ENCODE measurements at regions of chr17 and their contacts with region 1.

Region 1: GRCh38 chr17:76868176-76868668 is at the start of gene MGAT5B:
- DNase-seq: peak; percentile 91
- ATAC-seq: peak; percentile 78
- H3K4me3 Mint-ChIP-seq: peak within 1 kb of the TSS; percentile 78
- H3K27ac Mint-ChIP-seq: no peak within 1 kb of the TSS
- H3K4me1 Mint-ChIP-seq: peaks cover 12% of the 10 kb centered on the region
- H3K27me3 Mint-ChIP-seq: peaks cover 29% of the 10 kb centered on the region
- CTCF ChIP-seq: peak; percentile 75
- total RNA-seq, gene MGAT5B: 11.5 to 12.0 TPM (median 11.6 TPM) in 3 replicates

Region 2: DNA sequence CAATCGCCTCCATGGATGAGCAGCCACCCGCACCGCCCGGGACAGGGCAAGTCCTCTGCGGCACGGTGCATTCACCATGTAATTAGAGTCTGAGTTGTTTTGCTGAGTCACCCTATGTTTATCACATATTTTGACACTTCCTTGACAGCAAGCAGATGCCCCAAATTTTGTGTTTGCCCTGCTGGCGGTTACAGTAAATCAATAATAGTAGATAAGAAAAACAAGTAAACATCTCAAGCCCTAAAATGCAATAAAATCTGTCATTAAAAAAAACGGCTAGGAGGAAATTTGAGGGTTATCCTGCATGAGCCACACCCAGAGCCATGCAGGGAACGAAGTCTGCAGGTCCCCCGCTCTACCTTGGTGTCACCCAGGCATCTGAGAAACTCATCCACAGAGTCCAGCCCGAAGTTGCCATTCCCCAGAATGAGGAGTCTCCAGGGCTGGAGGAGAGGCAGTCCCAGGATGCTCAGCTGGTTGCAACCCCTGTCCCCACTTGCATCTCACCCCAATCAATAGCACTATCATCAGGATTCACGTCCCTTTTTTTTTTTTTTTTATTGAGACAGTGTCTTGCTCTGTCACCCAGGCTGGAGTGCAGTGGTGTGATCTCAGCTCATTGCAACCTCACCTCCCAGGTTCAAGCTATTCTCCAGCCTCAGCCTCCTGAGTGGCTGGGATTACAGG is 208.2 kb before region 1 on chr17:
- CTCF ChIA-PET with region 1: no interaction called
- POLR2A ChIA-PET with region 1: no interaction called
- DNase-seq: no peak
- ATAC-seq: no peak
- H3K4me3 Mint-ChIP-seq: no peak overlapping the region
- H3K27ac Mint-ChIP-seq: no peak overlapping the region
- H3K4me1 Mint-ChIP-seq: peaks cover 4% of the 10 kb centered on the region; the same call in 1 of the 2 replicates
- H3K27me3 Mint-ChIP-seq: no peaks in the 10 kb centered on the region
- CTCF ChIP-seq: no peak

Region 3: GRCh38 chr17:76805319-76805718 is 62.9 kb before region 1 on chr17:
- CTCF ChIA-PET with region 1: no interaction called
- POLR2A ChIA-PET with region 1: no interaction called
- DNase-seq: no peak
- ATAC-seq: no peak
- H3K4me3 Mint-ChIP-seq: no peak overlapping the region
- H3K27ac Mint-ChIP-seq: no peak overlapping the region
- H3K4me1 Mint-ChIP-seq: peaks cover 5% of the 10 kb centered on the region
- H3K27me3 Mint-ChIP-seq: no peaks in the 10 kb centered on the region
- CTCF ChIP-seq: no peak

Region 4: DNA sequence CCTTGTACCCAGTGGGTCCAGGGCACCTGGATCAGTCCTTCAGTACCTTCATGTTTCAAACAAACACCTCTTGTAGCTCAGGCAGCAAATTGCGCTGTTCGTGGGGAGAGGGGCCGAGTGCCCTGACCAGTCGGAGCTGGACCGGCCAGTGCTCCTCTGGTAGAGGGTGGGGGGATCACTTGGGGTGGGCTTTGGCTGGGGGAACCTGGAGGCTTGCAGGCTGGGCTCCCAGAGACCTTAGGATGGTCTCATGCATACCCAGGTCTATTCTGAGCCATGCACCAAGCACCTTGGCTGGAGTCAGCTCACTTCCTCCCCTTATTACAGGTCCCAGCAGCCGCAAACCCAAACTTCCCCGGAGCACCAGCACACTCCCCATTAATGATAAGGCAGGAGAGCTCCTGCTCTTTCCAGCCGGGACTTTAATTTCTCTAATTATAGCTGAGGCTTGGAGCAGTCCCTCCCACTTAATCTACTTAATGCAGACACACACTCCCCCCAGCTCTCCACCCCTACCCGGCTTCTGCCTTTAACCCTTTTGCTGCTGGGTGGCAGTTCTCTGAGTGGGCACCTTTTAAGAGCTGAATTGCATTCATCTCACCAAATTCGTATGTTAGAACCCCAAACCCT is 26.3 kb before region 1 on chr17:
- CTCF ChIA-PET with region 1: interaction called, 24 read pairs
- POLR2A ChIA-PET with region 1: no interaction called
- DNase-seq: peak; percentile 25
- ATAC-seq: peak; percentile 65
- H3K4me3 Mint-ChIP-seq: peak overlapping the region; percentile 56
- H3K27ac Mint-ChIP-seq: no peak overlapping the region
- H3K4me1 Mint-ChIP-seq: peaks cover 51% of the 10 kb centered on the region
- H3K27me3 Mint-ChIP-seq: peaks cover 33% of the 10 kb centered on the region
- CTCF ChIP-seq: no peak

Region 5: GRCh38 chr17:76887802-76888201 is 19.6 kb after region 1 on chr17:
- CTCF ChIA-PET with region 1: interaction called, 43 read pairs
- POLR2A ChIA-PET with region 1: no interaction called
- DNase-seq: no peak
- ATAC-seq: 0 out of 2 replicates have a peak, but pooled peaks have one; percentile 15
- H3K4me3 Mint-ChIP-seq: no peak overlapping the region
- H3K27ac Mint-ChIP-seq: peak overlapping the region; percentile 4; the same call in 1 of the 2 replicates
- H3K4me1 Mint-ChIP-seq: peaks cover 24% of the 10 kb centered on the region
- H3K27me3 Mint-ChIP-seq: no peaks in the 10 kb centered on the region
- CTCF ChIP-seq: no peak

Region 6: GRCh38 chr17:76940738-76941350 is 72.6 kb after region 1 on chr17:
- CTCF ChIA-PET with region 1: interaction called, 39 read pairs
- POLR2A ChIA-PET with region 1: no interaction called
- DNase-seq: peak; percentile 85
- ATAC-seq: peak; percentile 78
- H3K4me3 Mint-ChIP-seq: 0 out of 2 replicates have a peak overlapping the region, but pooled peaks have one; percentile 7
- H3K27ac Mint-ChIP-seq: peak overlapping the region; percentile 67
- H3K4me1 Mint-ChIP-seq: peaks cover 28% of the 10 kb centered on the region
- H3K27me3 Mint-ChIP-seq: no peaks in the 10 kb centered on the region
- CTCF ChIP-seq: peak; percentile 34; the same call in 1 of the 2 replicates

Region 7: GRCh38 chr17:76968707-76969597 is 100.7 kb after region 1 on chr17:
- CTCF ChIA-PET with region 1: interaction called, 24 read pairs
- POLR2A ChIA-PET with region 1: interaction called, 8 read pairs
- DNase-seq: peak; percentile 96
- ATAC-seq: peak; percentile 85
- H3K4me3 Mint-ChIP-seq: peak overlapping the region; percentile 78
- H3K27ac Mint-ChIP-seq: peak overlapping the region; percentile 99
- H3K4me1 Mint-ChIP-seq: peaks cover 70% of the 10 kb centered on the region
- H3K27me3 Mint-ChIP-seq: no peaks in the 10 kb centered on the region; the same call in 1 of the 2 replicates
- CTCF ChIP-seq: no peak

Region 8: DNA sequence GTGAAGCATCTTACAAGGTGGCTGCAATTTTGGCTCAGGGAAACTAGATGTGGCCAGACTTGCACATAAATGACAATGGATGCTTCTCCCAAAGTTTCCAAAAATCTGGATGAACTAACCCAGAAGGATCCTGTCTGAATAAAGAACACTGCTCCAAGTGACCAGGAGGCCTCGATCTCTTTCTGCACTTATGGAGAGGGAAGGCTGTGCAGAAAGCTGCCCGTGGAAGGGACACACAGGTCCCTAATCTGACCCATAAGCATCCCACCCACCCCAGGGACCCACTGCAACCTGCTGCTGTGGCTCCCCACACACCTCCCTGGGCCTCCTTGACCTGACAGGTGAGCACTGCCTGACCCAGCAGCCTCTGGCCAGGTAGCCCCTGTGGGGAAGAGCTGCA is 197.9 kb after region 1 on chr17:
- CTCF ChIA-PET with region 1: interaction called, 30 read pairs
- POLR2A ChIA-PET with region 1: interaction called, 3 read pairs
- DNase-seq: no peak
- ATAC-seq: no peak
- H3K4me3 Mint-ChIP-seq: no peak overlapping the region
- H3K27ac Mint-ChIP-seq: no peak overlapping the region
- H3K4me1 Mint-ChIP-seq: peaks cover 18% of the 10 kb centered on the region
- H3K27me3 Mint-ChIP-seq: no peaks in the 10 kb centered on the region
- CTCF ChIP-seq: no peak